K562 (cell line): ENCODE measurements at regions of chr12 and their contacts with region 1.

Region 1: DNA sequence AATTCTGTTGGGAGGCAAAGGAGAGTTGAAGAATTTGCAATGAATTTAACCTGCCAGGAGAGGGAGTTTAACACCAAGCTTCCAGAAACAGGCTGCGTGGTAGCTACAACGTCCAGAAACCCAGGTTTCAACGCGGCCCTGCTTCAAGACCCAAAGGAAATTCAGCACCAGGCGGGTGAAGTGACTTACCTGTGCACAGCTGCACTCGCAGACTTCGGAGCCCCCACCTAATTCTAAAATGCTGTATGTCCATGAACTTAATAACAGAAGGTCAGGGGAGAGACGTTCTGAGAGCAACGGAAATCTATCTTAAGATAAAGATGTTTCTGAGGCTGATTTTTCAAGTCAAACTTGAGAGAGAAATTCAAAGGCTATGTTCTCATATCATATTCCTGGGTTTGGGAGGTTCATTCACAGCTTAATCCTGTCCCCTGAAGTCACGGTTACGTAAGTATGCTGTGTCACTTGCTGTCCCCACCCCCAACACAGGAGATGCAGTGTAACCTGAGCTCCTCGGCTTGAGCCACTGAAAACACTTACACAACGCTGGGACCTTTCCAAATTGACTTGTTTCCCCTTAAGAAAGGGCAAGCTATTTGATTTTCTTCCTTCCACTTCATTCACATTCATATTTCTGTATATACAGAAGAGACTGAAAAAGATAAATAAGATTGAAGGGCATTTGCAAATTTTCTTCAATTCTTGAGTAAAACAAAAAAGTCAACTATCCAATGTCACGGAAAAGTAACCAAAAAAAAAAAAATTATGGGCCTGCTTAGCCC is 22.7 kb downstream of the CLIP1 start:
- DNase-seq: peak; percentile 87 to 96 (median 90)
- ATAC-seq: peak; percentile 95
- H3K4me3 ChIP-seq: peak overlapping the region; percentile 33
- H3K27ac ChIP-seq: peak overlapping the region; percentile 99
- H3K4me1 ChIP-seq: peaks cover 6 to 9% of the 10 kb centered on the region in 2 experiments; a peak in 4 of 5 replicates
- H3K27me3 ChIP-seq: no peaks in the 10 kb centered on the region
- CTCF ChIP-seq: peak; percentile 69 to 84 (median 81)
- EP300 ChIP-seq: peak; percentile 76
- POLR2A ChIP-seq: no peak
- RAD21 ChIP-seq: peak; percentile 88 to 92

Region 2: GRCh38 chr12:121872546-121873215 is 527.1 kb before region 1 on chr12:
- CTCF ChIA-PET with region 1: no interaction called
- POLR2A ChIA-PET with region 1: no interaction called
- in situ Hi-C with region 1: no loop called
- intact Hi-C with region 1: no loop called
- DNase-seq: peak in 1 of 4 experiments; percentile 27
- ATAC-seq: peak; percentile 31; the same call in 2 of the 3 replicates
- H3K4me3 ChIP-seq: no peak overlapping the region
- H3K27ac ChIP-seq: no peak overlapping the region
- H3K4me1 ChIP-seq: peaks cover 5 to 11% of the 10 kb centered on the region in 2 experiments
- H3K27me3 ChIP-seq: no peaks in the 10 kb centered on the region
- CTCF ChIP-seq: no peak
- EP300 ChIP-seq: no peak
- POLR2A ChIP-seq: no peak
- RAD21 ChIP-seq: no peak

Region 3: GRCh38 chr12:122389697-122390096 is 10.1 kb before region 1 on chr12:
- CTCF ChIA-PET with region 1: no interaction called
- POLR2A ChIA-PET with region 1: interaction called, 30 read pairs
- in situ Hi-C with region 1: no loop called
- intact Hi-C with region 1: no loop called
- DNase-seq: no peak
- ATAC-seq: peak; percentile 40; the same call in 2 of the 3 replicates
- H3K4me3 ChIP-seq: no peak overlapping the region
- H3K27ac ChIP-seq: no peak overlapping the region
- H3K4me1 ChIP-seq: peaks cover 0 to 6% of the 10 kb centered on the region in 2 experiments; a peak in 2 of 5 replicates
- H3K27me3 ChIP-seq: no peaks in the 10 kb centered on the region
- CTCF ChIP-seq: no peak
- EP300 ChIP-seq: no peak
- POLR2A ChIP-seq: no peak
- RAD21 ChIP-seq: no peak

Region 4: GRCh38 chr12:122421821-122422729 is 22.3 kb after region 1 on chr12 and contains the start of gene CLIP1:
- CTCF ChIA-PET with region 1: interaction called, 6 read pairs
- POLR2A ChIA-PET with region 1: interaction called, 30 read pairs
- in situ Hi-C with region 1: no loop called
- intact Hi-C with region 1: loop called (anchors 1 kb)
- DNase-seq: peak; percentile 71 to 84 (median 76)
- ATAC-seq: peak; percentile 87
- H3K4me3 ChIP-seq: peak within 1 kb of the TSS; percentile 72
- H3K27ac ChIP-seq: peak within 1 kb of the TSS; percentile 80
- H3K4me1 ChIP-seq: peaks cover 26 to 31% of the 10 kb centered on the region in 2 experiments
- H3K27me3 ChIP-seq: no peaks in the 10 kb centered on the region
- CTCF ChIP-seq: peak; percentile 46 to 84 (median 59); a peak in 4 of 6 replicates
- EP300 ChIP-seq: no peak
- POLR2A ChIP-seq: no peak; the same call in 1 of the 2 replicates
- RAD21 ChIP-seq: peak; percentile 64 to 68
- polyA plus RNA-seq, gene CLIP1: 5.8 to 6.1 TPM

Region 5: DNA sequence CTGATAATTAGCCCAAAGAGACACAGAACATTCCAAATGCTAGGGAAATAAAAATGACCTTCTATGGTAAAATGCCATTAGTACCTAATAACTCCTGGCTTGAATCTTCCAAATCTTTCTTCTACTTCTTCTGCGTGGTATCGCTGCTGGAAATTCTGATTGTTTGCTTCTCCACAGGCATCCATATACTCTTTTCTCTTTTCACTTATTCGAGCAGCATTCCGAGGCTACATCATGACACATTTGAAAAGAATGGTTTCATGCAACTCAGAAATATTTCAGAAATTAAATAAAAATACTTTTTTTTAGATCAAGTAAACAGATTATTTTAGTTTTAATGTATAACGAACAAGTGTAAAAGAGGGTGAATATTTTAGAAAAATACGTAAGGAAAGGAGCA is 82.1 kb after region 1 on chr12:
- CTCF ChIA-PET with region 1: no interaction called
- POLR2A ChIA-PET with region 1: interaction called, 17 read pairs
- in situ Hi-C with region 1: loop called (anchors 5 kb)
- intact Hi-C with region 1: no loop called
- DNase-seq: no peak
- ATAC-seq: no peak
- H3K4me3 ChIP-seq: no peak overlapping the region
- H3K27ac ChIP-seq: no peak overlapping the region
- H3K4me1 ChIP-seq: no peaks in the 10 kb centered on the region
- H3K27me3 ChIP-seq: no peaks in the 10 kb centered on the region
- CTCF ChIP-seq: no peak
- EP300 ChIP-seq: no peak
- POLR2A ChIP-seq: no peak
- RAD21 ChIP-seq: no peak

Region 6: DNA sequence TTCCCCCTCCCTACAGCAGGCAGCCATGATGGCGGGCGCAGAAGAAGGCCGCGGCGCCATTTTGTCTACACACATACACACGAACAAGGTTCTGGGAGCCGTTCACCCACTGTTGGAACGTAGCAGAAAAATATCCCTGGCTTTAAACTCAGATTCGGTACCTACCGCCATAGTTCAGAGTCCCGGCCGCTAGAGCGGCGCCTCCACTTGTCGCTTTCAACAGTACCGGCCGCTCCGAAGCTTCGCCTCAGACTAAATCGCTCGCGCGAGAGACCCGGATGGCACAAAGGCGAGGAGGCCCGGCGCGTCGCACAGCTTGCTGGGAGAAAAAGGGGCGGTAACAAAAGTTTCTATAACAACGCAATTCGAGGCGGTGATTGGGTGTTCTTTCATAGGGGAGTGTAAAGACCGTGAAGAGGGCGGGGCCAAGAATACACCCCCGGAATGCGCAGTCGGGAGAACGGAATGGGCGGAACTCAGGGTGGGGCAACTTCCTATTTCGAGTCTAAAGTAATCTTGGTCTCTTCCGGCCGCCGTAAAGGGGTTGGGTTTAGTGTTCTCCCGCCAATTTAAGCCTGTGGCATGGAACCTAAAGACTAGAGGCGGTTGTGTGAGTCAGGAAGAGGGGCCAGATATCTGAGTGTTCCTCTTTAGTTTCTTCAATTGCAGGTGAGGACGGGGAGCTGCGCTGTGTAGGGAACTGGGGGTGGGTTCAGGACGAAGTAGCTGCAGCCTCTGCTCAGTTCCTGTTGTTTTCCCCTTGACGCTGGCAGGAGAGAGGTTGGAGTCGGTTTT is 127.1 kb after region 1 on chr12 and contains the starts of genes KNTC1 and RSRC2:
- CTCF ChIA-PET with region 1: no interaction called
- POLR2A ChIA-PET with region 1: interaction called, 10 read pairs
- in situ Hi-C with region 1: no loop called
- intact Hi-C with region 1: no loop called
- DNase-seq: peak; percentile 94 to 100 (median 96)
- ATAC-seq: peak; percentile 90
- H3K4me3 ChIP-seq: peak within 1 kb of the TSS; percentile 62
- H3K27ac ChIP-seq: peak within 1 kb of the TSS; percentile 99
- H3K4me1 ChIP-seq: peaks cover 4 to 21% of the 10 kb centered on the region in 2 experiments; a peak in 2 of 5 replicates
- H3K27me3 ChIP-seq: no peaks in the 10 kb centered on the region
- CTCF ChIP-seq: no peak
- EP300 ChIP-seq: peak; percentile 34
- POLR2A ChIP-seq: peak; percentile 99
- RAD21 ChIP-seq: no peak
- polyA plus RNA-seq, gene KNTC1: 38.9 to 57.8 TPM
- polyA plus RNA-seq, gene RSRC2: 52.6 to 72.3 TPM

Region 7: DNA sequence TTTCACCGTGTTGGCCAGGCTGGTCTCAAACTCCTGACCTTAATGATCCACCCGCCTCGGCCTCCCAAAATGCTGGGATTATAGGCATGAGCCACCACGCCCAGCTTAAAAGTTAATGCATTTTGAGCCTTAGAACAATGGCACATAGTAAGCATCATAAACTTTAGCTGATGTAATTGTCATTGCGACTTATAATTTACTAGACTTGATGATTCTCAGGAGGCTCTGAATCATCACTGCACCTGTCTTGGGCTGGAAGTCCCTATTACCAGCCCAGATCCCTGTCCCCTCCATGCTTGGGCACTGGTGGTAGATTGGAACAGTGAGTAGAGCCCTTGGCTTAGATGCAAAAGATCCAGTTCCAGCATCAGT is 1010.2 kb after region 1 on chr12:
- CTCF ChIA-PET with region 1: no interaction called
- POLR2A ChIA-PET with region 1: no interaction called
- in situ Hi-C with region 1: no loop called
- intact Hi-C with region 1: no loop called
- DNase-seq: peak in 2 of 4 experiments; percentile 4 to 7
- ATAC-seq: peak; percentile 15
- H3K4me3 ChIP-seq: no peak overlapping the region
- H3K27ac ChIP-seq: no peak overlapping the region
- H3K4me1 ChIP-seq: no peaks in the 10 kb centered on the region
- H3K27me3 ChIP-seq: no peaks in the 10 kb centered on the region
- CTCF ChIP-seq: no peak
- EP300 ChIP-seq: no peak
- POLR2A ChIP-seq: peak; percentile 16
- RAD21 ChIP-seq: no peak